HepG2 (cell line): ENCODE measurements at regions of chr11 and their contacts with region 1.

Region 1: GRCh38 chr11:10735481-10736475 is 15.3 kb upstream of the CTR9 start:
- DNase-seq: peak; percentile 84
- ATAC-seq: peak; percentile 99
- H3K4me3 ChIP-seq: peak overlapping the region; percentile 14 to 62 (median 15); a peak in 4 of 6 replicates
- H3K27ac ChIP-seq: no peak overlapping the region
- H3K4me1 ChIP-seq: peaks cover 5% of the 10 kb centered on the region; the same call in 1 of the 2 replicates
- H3K27me3 ChIP-seq: peaks cover 3 to 7% of the 10 kb centered on the region in 2 experiments; a peak in 3 of 5 replicates
- CTCF ChIP-seq: peak; percentile 99
- EP300 ChIP-seq: no peak
- POLR2A ChIP-seq: no peak
- RAD21 ChIP-seq: peak; percentile 99

Region 2: DNA sequence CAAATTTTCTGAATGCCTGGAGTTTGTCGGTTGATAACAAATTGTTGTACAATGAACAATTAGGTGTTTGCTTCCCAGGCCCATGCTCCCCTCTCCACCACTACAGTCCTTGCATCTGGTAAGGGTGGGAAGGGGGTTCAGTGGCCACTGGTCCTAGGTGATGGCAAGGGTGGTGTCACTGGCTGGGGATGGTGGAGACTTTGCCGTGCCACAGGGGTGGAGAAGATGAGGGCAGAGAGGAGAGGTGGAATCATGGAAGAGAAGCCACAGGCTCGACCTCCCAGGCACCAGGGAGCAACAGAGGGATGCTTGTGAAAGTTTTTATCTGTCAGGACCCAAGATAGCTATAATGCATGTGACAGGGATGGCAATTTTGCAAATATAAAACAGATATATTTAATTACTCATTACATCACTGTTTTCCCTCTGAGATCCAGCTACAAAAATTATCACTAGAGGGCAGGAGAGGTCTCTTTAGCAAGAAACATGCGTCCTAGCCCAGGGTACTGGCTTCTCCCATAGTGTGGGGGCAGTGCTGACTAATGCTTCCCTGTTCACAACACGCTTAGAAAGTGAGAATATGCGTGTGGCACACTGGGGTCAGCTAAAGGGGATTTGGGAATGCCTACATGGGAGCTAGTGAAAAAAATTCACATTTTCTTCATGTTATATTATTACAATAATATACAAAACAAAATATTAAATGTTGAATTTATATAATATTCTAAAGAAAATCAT is 329.8 kb before region 1 on chr11:
- CTCF ChIA-PET with region 1: interaction called, 42 read pairs
- POLR2A ChIA-PET with region 1: no interaction called
- in situ Hi-C with region 1: loop called (anchors 5 kb)
- intact Hi-C with region 1: loop called (anchors 1 kb)
- DNase-seq: peak; percentile 80
- ATAC-seq: peak; percentile 92
- H3K4me3 ChIP-seq: no peak overlapping the region
- H3K27ac ChIP-seq: no peak overlapping the region
- H3K4me1 ChIP-seq: peaks cover 8% of the 10 kb centered on the region
- H3K27me3 ChIP-seq: peaks cover 0 to 2% of the 10 kb centered on the region in 2 experiments; a peak in 1 of 5 replicates
- CTCF ChIP-seq: peak; percentile 82
- EP300 ChIP-seq: no peak
- POLR2A ChIP-seq: no peak
- RAD21 ChIP-seq: peak; percentile 75

Region 3: GRCh38 chr11:10514210-10514609 is 221.6 kb before region 1 on chr11:
- CTCF ChIA-PET with region 1: interaction called, 11 read pairs
- POLR2A ChIA-PET with region 1: no interaction called
- in situ Hi-C with region 1: no loop called
- intact Hi-C with region 1: loop called (anchors 1 kb)
- DNase-seq: no peak
- ATAC-seq: no peak
- H3K4me3 ChIP-seq: no peak overlapping the region
- H3K27ac ChIP-seq: no peak overlapping the region
- H3K4me1 ChIP-seq: no peaks in the 10 kb centered on the region
- H3K27me3 ChIP-seq: no peaks in the 10 kb centered on the region
- CTCF ChIP-seq: no peak
- EP300 ChIP-seq: no peak
- POLR2A ChIP-seq: no peak
- RAD21 ChIP-seq: no peak

Region 4: DNA sequence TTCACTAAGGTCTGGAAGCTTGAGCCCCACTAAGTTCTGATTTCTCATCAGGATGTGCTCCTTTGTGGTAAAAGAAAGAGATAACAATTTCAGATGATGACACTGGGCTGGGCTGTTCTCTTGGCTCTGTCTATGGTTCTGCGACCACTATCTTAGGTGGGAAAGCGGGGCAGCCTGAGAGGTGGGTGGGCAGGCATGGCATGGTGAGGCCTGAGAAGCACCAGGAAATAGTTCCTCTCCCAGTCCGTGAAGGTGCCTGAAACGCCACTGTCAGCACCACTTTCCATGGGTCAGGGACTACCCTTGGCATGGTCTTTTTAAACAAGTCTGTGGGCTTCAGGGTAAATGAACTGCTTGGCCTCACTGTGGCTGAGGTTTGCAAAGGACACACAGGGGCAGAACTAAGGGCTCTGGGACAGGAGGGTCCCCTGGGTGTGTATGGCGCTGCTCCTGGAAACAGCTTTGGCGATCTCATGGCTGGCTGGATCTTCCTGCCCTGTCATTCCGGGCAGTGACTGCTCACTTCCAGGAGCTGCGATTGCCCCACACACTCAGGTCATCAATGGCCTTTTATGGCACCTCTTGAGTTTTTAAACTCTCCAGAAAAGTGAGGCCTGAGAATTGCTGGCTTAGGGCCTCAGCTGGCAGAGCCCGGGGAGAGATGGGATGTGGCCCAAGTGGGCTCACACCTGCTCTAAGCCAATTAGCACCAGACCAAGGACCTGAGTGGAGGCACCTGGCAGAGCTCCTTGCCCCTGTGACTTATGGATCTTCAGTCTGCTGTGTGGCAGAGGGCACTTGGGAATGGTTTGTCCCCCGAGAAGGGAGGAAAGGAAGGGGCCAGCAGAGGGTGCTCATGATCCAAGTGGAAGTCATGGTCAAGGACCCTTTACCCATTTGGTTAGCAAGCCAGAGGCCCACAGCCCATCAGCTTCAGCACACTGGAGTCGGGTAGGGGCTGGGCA is 111.7 kb before region 1 on chr11:
- CTCF ChIA-PET with region 1: interaction called, 21 read pairs
- POLR2A ChIA-PET with region 1: no interaction called
- in situ Hi-C with region 1: loop called (anchors 5 kb)
- intact Hi-C with region 1: loop called (anchors 1 kb)
- DNase-seq: peak; percentile 37
- ATAC-seq: peak; percentile 57
- H3K4me3 ChIP-seq: no peak overlapping the region
- H3K27ac ChIP-seq: no peak overlapping the region
- H3K4me1 ChIP-seq: no peaks in the 10 kb centered on the region
- H3K27me3 ChIP-seq: peaks cover 11 to 27% of the 10 kb centered on the region in 2 experiments
- CTCF ChIP-seq: peak; percentile 58
- EP300 ChIP-seq: no peak
- POLR2A ChIP-seq: no peak
- RAD21 ChIP-seq: peak; percentile 46; the same call in 1 of the 2 replicates

Region 5: GRCh38 chr11:10653926-10654810 is 81.6 kb before region 1 on chr11:
- CTCF ChIA-PET with region 1: no interaction called
- POLR2A ChIA-PET with region 1: no interaction called
- in situ Hi-C with region 1: no loop called
- intact Hi-C with region 1: loop called (anchors 10 kb)
- DNase-seq: peak; percentile 57
- ATAC-seq: peak; percentile 71
- H3K4me3 ChIP-seq: no peak overlapping the region
- H3K27ac ChIP-seq: no peak overlapping the region
- H3K4me1 ChIP-seq: peaks cover 20% of the 10 kb centered on the region
- H3K27me3 ChIP-seq: peaks cover 0 to 10% of the 10 kb centered on the region in 2 experiments; a peak in 2 of 5 replicates
- CTCF ChIP-seq: peak; percentile 80
- EP300 ChIP-seq: no peak
- POLR2A ChIP-seq: no peak
- RAD21 ChIP-seq: peak; percentile 64

Region 6: GRCh38 chr11:10669258-10670033 is 66.3 kb before region 1 on chr11:
- CTCF ChIA-PET with region 1: no interaction called
- POLR2A ChIA-PET with region 1: no interaction called
- in situ Hi-C with region 1: no loop called
- intact Hi-C with region 1: no loop called
- DNase-seq: no peak
- ATAC-seq: no peak
- H3K4me3 ChIP-seq: no peak overlapping the region
- H3K27ac ChIP-seq: no peak overlapping the region
- H3K4me1 ChIP-seq: peaks cover 20% of the 10 kb centered on the region
- H3K27me3 ChIP-seq: peaks cover 0 to 9% of the 10 kb centered on the region in 2 experiments; a peak in 2 of 5 replicates
- CTCF ChIP-seq: no peak
- EP300 ChIP-seq: no peak
- POLR2A ChIP-seq: no peak
- RAD21 ChIP-seq: no peak

Region 7: DNA sequence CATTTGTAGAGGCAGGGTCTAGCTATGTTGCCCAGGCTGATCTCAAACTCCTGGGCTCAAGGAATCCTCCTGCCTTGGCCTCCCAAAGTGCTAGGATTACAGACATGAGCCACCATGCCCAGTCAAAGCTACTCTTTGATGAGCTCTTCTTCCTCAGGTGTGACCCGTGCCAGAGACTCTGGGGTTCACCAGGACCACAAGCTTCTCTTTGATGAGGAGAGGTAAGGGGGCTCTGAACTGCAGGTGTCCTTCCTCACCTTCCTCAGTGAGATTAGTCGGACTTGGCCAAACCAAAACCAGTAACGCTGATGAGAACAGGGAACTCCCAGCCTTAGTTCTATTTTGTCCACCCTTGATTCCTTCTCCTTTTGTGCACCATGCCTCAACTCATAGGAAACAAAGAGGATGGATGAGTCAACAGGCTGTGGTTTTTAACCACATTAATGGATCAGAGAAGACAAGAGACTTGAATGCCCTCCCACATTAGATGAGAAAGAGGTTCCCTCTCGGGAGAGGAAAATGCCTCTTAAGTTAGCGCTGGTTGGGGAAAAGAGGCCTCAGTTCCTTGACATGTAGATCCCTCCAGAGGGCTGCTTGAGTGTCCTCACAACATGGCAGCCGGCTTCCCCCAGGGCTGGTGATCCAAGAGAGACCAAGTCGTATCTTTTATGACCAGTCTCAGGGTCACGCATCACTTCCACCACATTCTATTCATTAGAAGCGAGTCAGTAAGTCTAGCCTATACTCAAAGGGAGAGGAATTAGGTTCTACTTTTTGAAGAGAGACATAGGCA is 10.5 kb before region 1 on chr11:
- CTCF ChIA-PET with region 1: no interaction called
- POLR2A ChIA-PET with region 1: no interaction called
- in situ Hi-C with region 1: no loop called
- intact Hi-C with region 1: no loop called
- DNase-seq: no peak
- ATAC-seq: no peak
- H3K4me3 ChIP-seq: no peak overlapping the region
- H3K27ac ChIP-seq: no peak overlapping the region
- H3K4me1 ChIP-seq: no peaks in the 10 kb centered on the region
- H3K27me3 ChIP-seq: peaks cover 9 to 33% of the 10 kb centered on the region in 2 experiments; a peak in 4 of 5 replicates
- CTCF ChIP-seq: no peak
- EP300 ChIP-seq: no peak
- POLR2A ChIP-seq: no peak
- RAD21 ChIP-seq: no peak